Caco-2 (cell line): ENCODE measurements at regions of chr11 and their contacts with region 1.

Region 1: GRCh38 chr11:119334174-119334930 is at the start of gene RNF26:
- DNase-seq: peak; percentile 99
- H3K4me3 ChIP-seq: peak within 1 kb of the TSS; percentile 77
- H3K4me3 Mint-ChIP-seq: peak within 1 kb of the TSS; percentile 82
- H3K27ac Mint-ChIP-seq: peak within 1 kb of the TSS; percentile 99
- H3K4me1 ChIP-seq: peaks cover 28% of the 10 kb centered on the region
- H3K4me1 Mint-ChIP-seq: peaks cover 29% of the 10 kb centered on the region
- H3K27me3 ChIP-seq: no peaks in the 10 kb centered on the region; the same call in 1 of the 2 replicates
- H3K27me3 Mint-ChIP-seq: peaks cover 4% of the 10 kb centered on the region
- CTCF ChIP-seq: no peak
- total RNA-seq, gene RNF26: 85.8 and 92.7 TPM in 2 replicates

Region 2: DNA sequence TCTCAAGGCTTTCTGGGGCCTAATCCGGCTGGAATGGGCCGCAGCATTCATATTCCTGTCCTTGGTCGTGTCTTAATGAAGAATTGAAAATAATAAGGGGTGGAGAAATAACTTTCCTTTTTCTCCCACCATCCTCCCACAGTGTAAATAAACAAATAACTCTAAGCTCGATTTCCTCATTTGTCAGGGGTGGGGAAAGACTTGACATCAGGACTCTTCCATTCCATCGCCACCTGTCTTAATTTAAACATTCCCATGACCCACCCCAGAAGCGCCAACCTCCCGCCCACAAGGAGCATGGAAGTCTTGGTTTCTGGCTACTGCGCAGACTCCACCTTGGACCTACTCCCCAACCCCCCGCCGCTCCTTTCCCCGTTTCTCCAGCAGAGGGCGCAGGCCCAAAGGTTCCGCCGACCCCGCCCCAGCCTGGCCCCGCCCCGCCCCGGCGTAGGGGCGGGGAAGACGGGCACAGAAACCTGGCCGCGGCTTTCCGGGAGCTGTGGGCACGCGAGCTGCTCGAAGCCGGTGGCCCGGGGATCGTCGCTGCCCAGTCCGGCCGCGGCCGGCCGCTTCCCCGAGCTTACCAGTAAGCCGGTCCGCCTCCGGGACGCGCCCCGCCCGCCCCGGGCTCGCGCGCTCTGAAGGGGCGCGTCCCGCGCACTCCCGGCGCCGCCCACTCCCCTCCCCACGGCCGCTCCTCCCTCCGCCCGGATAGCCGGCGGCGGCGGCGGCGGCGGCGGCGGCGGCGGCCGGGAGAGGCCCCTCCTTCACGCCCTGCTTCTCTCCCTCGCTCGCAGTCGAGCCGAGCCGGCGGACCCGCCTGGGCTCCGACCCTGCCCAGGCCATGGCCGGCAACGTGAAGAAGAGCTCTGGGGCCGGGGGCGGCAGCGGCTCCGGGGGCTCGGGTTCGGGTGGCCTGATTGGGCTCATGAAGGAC is 128.5 kb before region 1 on chr11 and contains the start of gene CBL:
- CTCF ChIA-PET with region 1: interaction called, 15 read pairs
- POLR2A ChIA-PET with region 1: no interaction called
- intact Hi-C with region 1: no loop called
- DNase-seq: peak; percentile 98 to 99
- H3K4me3 ChIP-seq: peak within 1 kb of the TSS; percentile 88
- H3K4me3 Mint-ChIP-seq: peak within 1 kb of the TSS; percentile 92
- H3K27ac Mint-ChIP-seq: peak within 1 kb of the TSS; percentile 87
- H3K4me1 ChIP-seq: peaks cover 37% of the 10 kb centered on the region
- H3K4me1 Mint-ChIP-seq: peaks cover 32% of the 10 kb centered on the region
- H3K27me3 ChIP-seq: no peaks in the 10 kb centered on the region
- H3K27me3 Mint-ChIP-seq: no peaks in the 10 kb centered on the region
- CTCF ChIP-seq: peak; percentile 98 to 99
- total RNA-seq, gene CBL: 52.7 and 53.5 TPM in 2 replicates

Region 3: GRCh38 chr11:119295178-119295577 is 39.2 kb before region 1 on chr11:
- CTCF ChIA-PET with region 1: no interaction called
- POLR2A ChIA-PET with region 1: no interaction called
- intact Hi-C with region 1: no loop called
- DNase-seq: no peak
- H3K4me3 ChIP-seq: no peak overlapping the region
- H3K4me3 Mint-ChIP-seq: no peak overlapping the region
- H3K27ac Mint-ChIP-seq: no peak overlapping the region
- H3K4me1 ChIP-seq: no peaks in the 10 kb centered on the region
- H3K4me1 Mint-ChIP-seq: no peaks in the 10 kb centered on the region
- H3K27me3 ChIP-seq: no peaks in the 10 kb centered on the region
- H3K27me3 Mint-ChIP-seq: no peaks in the 10 kb centered on the region
- CTCF ChIP-seq: no peak

Region 4: GRCh38 chr11:119323538-119324033 is 10.8 kb before region 1 on chr11:
- CTCF ChIA-PET with region 1: interaction called, 51 read pairs
- POLR2A ChIA-PET with region 1: interaction called, 18 read pairs
- intact Hi-C with region 1: loop called (anchors 1 kb)
- DNase-seq: peak; percentile 82 to 89
- H3K4me3 ChIP-seq: no peak overlapping the region
- H3K4me3 Mint-ChIP-seq: no peak overlapping the region
- H3K27ac Mint-ChIP-seq: no peak overlapping the region
- H3K4me1 ChIP-seq: peaks cover 24% of the 10 kb centered on the region
- H3K4me1 Mint-ChIP-seq: no peaks in the 10 kb centered on the region
- H3K27me3 ChIP-seq: no peaks in the 10 kb centered on the region
- H3K27me3 Mint-ChIP-seq: no peaks in the 10 kb centered on the region
- CTCF ChIP-seq: peak; percentile 84 to 95

Region 5: GRCh38 chr11:119352857-119353260 is 18.5 kb after region 1 on chr11:
- CTCF ChIA-PET with region 1: interaction called, 15 read pairs
- POLR2A ChIA-PET with region 1: interaction called, 3 read pairs
- intact Hi-C with region 1: no loop called
- DNase-seq: peak in 1 of 2 experiments; percentile 47
- H3K4me3 ChIP-seq: no peak overlapping the region
- H3K4me3 Mint-ChIP-seq: no peak overlapping the region
- H3K27ac Mint-ChIP-seq: no peak overlapping the region
- H3K4me1 ChIP-seq: peaks cover 7% of the 10 kb centered on the region; the same call in 1 of the 2 replicates
- H3K4me1 Mint-ChIP-seq: peaks cover 8% of the 10 kb centered on the region
- H3K27me3 ChIP-seq: no peaks in the 10 kb centered on the region
- H3K27me3 Mint-ChIP-seq: peaks cover 3% of the 10 kb centered on the region
- CTCF ChIP-seq: no peak

Region 6: GRCh38 chr11:119373921-119374631 is 39.7 kb after region 1 on chr11:
- CTCF ChIA-PET with region 1: interaction called, 220 read pairs
- POLR2A ChIA-PET with region 1: no interaction called
- intact Hi-C with region 1: loop called (anchors 1 kb)
- DNase-seq: peak; percentile 89 to 95
- H3K4me3 ChIP-seq: no peak overlapping the region
- H3K4me3 Mint-ChIP-seq: no peak overlapping the region
- H3K27ac Mint-ChIP-seq: no peak overlapping the region
- H3K4me1 ChIP-seq: peaks cover 32% of the 10 kb centered on the region
- H3K4me1 Mint-ChIP-seq: peaks cover 28% of the 10 kb centered on the region
- H3K27me3 ChIP-seq: no peaks in the 10 kb centered on the region
- H3K27me3 Mint-ChIP-seq: no peaks in the 10 kb centered on the region
- CTCF ChIP-seq: peak; percentile 98 to 99

Region 7: DNA sequence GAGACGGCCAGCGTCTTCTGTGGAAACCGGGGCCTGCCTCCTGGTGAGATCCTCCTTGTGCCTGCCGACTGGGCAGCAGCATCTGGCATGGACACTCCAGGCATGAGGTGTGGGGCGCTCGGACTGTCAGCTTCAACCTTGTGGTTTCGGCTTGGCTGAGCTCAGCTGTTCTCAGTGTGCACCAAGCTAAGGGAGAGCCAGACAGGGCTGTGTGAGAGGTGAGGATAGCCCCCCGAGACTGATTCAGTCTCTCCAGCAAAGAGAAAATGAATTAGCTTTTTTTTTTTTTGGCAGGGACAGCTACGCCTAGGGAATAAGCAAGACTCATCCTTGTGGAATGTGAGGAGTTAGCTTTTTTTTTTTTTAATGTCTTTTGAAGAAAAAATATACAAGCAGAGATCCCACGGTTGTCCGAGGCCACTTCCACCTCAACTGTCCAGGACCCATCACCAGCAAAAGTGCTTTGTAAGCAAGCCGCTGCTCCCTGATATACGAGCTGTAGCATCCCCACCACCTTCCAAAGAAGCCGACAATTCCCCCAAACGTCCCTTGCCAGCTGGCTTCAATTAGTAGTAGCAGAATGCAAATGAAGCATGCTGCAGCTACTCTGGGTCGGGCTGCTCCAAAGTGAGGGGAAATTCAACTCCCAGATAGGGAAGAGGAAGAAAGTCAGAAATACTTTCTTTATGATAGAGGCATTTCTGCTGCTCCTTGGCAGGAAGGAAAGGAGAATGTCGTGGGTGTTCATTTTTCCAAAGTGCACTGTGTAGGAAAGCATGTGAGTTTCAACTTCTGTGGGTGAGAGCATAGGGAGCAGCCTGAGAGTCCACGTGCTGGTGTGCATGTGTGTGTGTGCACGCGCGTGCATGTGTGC is 98.4 kb after region 1 on chr11:
- CTCF ChIA-PET with region 1: interaction called, 13 read pairs
- POLR2A ChIA-PET with region 1: no interaction called
- intact Hi-C with region 1: no loop called
- DNase-seq: no peak
- H3K4me3 ChIP-seq: no peak overlapping the region
- H3K4me3 Mint-ChIP-seq: no peak overlapping the region
- H3K27ac Mint-ChIP-seq: no peak overlapping the region
- H3K4me1 ChIP-seq: no peaks in the 10 kb centered on the region
- H3K4me1 Mint-ChIP-seq: no peaks in the 10 kb centered on the region
- H3K27me3 ChIP-seq: no peaks in the 10 kb centered on the region
- H3K27me3 Mint-ChIP-seq: peaks cover 15% of the 10 kb centered on the region
- CTCF ChIP-seq: no peak

Region 8: GRCh38 chr11:119550053-119550752 is 215.9 kb after region 1 on chr11:
- CTCF ChIA-PET with region 1: interaction called, 10 read pairs
- POLR2A ChIA-PET with region 1: no interaction called
- intact Hi-C with region 1: no loop called
- DNase-seq: no peak
- H3K4me3 ChIP-seq: no peak overlapping the region
- H3K4me3 Mint-ChIP-seq: no peak overlapping the region
- H3K27ac Mint-ChIP-seq: no peak overlapping the region
- H3K4me1 ChIP-seq: no peaks in the 10 kb centered on the region
- H3K4me1 Mint-ChIP-seq: no peaks in the 10 kb centered on the region
- H3K27me3 ChIP-seq: no peaks in the 10 kb centered on the region
- H3K27me3 Mint-ChIP-seq: no peaks in the 10 kb centered on the region
- CTCF ChIP-seq: no peak